Pancreas (tissue), 10 donors: ENCODE measurements at regions of chrX and their contacts with region 1.

Region 1: GRCh38 chrX:130539721-130540321 is 138.0 kb downstream of the RBMX2 start:
- DNase-seq: peak in 5 of 6 donors; percentile 8 to 66 (median 44)
- ATAC-seq: peak; percentile 50 to 83 (median 76)
- H3K4me3 ChIP-seq: no peak overlapping the region
- H3K27ac ChIP-seq: no peak overlapping the region
- H3K4me1 ChIP-seq: no peaks in the 10 kb centered on the region
- H3K27me3 ChIP-seq: peaks cover 0 to 4% (median 1%) of the 10 kb centered on the region in 4 donors
- CTCF ChIP-seq: peak; percentile 46 to 72 (median 60)

Region 2: GRCh38 chrX:130575831-130576389 is 36.1 kb after region 1 on chrX:
- intact Hi-C with region 1: no loop called
- DNase-seq: peak; percentile 2 to 57 (median 32)
- ATAC-seq: peak in 3 of 4 donors; percentile 71 to 82 (median 78)
- H3K4me3 ChIP-seq: no peak overlapping the region
- H3K27ac ChIP-seq: no peak overlapping the region
- H3K4me1 ChIP-seq: no peaks in the 10 kb centered on the region
- H3K27me3 ChIP-seq: peaks cover 0 to 10% (median 3%) of the 10 kb centered on the region in 4 donors
- CTCF ChIP-seq: peak; percentile 53 to 80 (median 66)

Region 3: GRCh38 chrX:130909469-130910136 is 369.8 kb after region 1 on chrX:
- intact Hi-C with region 1: loop called in 2 of 3 experiments (anchors 5 to 10 kb)
- DNase-seq: no peak
- ATAC-seq: peak in 1 of 4 donors; percentile 26
- H3K4me3 ChIP-seq: no peak overlapping the region
- H3K27ac ChIP-seq: no peak overlapping the region
- H3K4me1 ChIP-seq: no peaks in the 10 kb centered on the region
- H3K27me3 ChIP-seq: no peaks in the 10 kb centered on the region
- CTCF ChIP-seq: no peak

Region 4: DNA sequence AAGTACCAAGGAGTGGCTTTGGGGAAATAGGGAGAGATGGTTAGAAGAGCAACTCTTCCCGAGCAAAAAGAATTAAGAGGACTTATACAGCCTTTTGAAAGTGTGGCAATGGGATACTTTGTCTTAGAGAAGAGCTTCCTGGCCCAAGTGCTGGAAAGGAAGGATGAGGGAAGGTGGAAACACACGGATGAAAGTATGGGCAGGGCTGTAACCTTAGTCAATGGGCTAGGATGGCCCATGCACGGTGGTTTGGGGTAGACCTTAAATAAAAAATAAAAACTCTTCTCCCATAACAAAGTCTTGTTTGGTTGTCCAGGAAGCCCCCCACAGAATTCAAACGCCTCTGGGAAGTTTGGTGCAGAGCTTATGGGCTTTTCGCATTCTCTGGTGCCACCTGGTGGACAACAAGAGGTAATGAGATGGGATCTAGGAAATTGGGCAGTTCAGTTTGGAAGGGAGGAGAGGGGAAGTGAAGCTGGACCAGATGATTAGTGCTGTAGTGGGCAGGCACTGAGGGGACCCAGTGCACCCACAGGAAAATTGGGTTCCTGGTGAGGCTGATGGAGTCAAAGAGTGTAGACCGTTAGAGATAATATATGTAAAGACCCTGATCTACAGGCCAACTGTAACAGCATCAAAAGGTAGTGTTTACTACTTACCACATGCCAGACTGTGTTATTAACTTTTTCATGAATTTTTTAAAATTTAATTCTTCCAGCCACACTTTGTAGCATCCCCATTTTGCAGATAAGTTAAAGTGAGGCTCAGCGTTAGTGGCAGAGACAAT is 377.0 kb after region 1 on chrX:
- intact Hi-C with region 1: loop called in 2 of 3 experiments (anchors 5 to 10 kb)
- DNase-seq: peak in 3 of 6 donors; percentile 11 to 45 (median 18)
- ATAC-seq: peak in 3 of 4 donors; percentile 80 to 87 (median 84)
- H3K4me3 ChIP-seq: no peak overlapping the region
- H3K27ac ChIP-seq: no peak overlapping the region
- H3K4me1 ChIP-seq: no peaks in the 10 kb centered on the region
- H3K27me3 ChIP-seq: peaks cover 0 to 10% (median 0%) of the 10 kb centered on the region in 4 donors
- CTCF ChIP-seq: peak; percentile 70 to 83 (median 74)